WTC11 (cell line): ENCODE measurements at regions of chr18 and their contacts with region 1.

Region 1: GRCh38 chr18:11553098-11553940 is 56.1 kb upstream of the SLC35G4 start:
- DNase-seq: peak; percentile 57
- ATAC-seq: peak; percentile 95
- H3K4me3 Mint-ChIP-seq: no peak overlapping the region
- H3K27ac Mint-ChIP-seq: no peak overlapping the region
- H3K4me1 Mint-ChIP-seq: no peaks in the 10 kb centered on the region
- H3K27me3 Mint-ChIP-seq: no peaks in the 10 kb centered on the region
- CTCF ChIP-seq: peak; percentile 85

Region 2: DNA sequence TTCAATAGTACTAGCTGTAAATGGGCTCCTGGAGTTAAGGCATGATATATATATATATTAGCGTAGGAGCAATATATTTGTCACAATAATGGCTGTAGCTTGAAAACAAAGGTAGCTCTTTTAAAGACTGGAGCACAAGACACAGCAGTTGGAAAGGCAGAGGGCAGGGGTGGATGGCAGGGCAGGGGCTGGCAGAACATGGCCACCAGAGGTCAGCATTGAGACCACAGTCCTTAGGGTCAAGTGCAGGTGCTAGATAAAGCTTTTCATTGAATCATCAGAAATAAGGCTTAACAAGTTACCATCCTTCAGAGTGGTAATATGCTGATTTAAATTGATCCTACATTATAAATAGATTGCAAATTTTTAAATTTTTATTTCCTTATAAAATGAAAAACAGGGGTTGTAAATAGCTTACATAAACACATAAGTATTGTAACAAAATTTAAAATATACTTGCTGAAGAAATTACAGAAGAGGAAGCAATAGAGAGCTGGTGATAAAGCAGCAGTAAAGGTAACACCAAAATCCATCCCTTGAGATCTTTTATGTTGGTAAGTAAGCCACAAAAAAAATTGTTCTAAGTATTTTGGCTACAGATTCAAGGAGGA is 242.7 kb before region 1 on chr18:
- CTCF ChIA-PET with region 1: interaction called, 41 read pairs
- POLR2A ChIA-PET with region 1: no interaction called
- DNase-seq: peak; percentile 80
- ATAC-seq: peak; percentile 90
- H3K4me3 Mint-ChIP-seq: no peak overlapping the region
- H3K27ac Mint-ChIP-seq: no peak overlapping the region
- H3K4me1 Mint-ChIP-seq: no peaks in the 10 kb centered on the region
- H3K27me3 Mint-ChIP-seq: no peaks in the 10 kb centered on the region
- CTCF ChIP-seq: peak; percentile 74

Region 3: GRCh38 chr18:11512096-11513030 is 41.0 kb before region 1 on chr18:
- CTCF ChIA-PET with region 1: interaction called, 14 read pairs
- POLR2A ChIA-PET with region 1: no interaction called
- DNase-seq: no peak
- ATAC-seq: peak; percentile 48; the same call in 1 of the 2 replicates
- H3K4me3 Mint-ChIP-seq: no peak overlapping the region
- H3K27ac Mint-ChIP-seq: no peak overlapping the region
- H3K4me1 Mint-ChIP-seq: peaks cover 4% of the 10 kb centered on the region; the same call in 1 of the 2 replicates
- H3K27me3 Mint-ChIP-seq: no peaks in the 10 kb centered on the region
- CTCF ChIP-seq: no peak

Region 4: GRCh38 chr18:11541202-11541601 is 12.1 kb before region 1 on chr18:
- CTCF ChIA-PET with region 1: interaction called, 16 read pairs
- POLR2A ChIA-PET with region 1: no interaction called
- DNase-seq: no peak
- ATAC-seq: no peak
- H3K4me3 Mint-ChIP-seq: no peak overlapping the region
- H3K27ac Mint-ChIP-seq: no peak overlapping the region
- H3K4me1 Mint-ChIP-seq: peaks cover 12% of the 10 kb centered on the region
- H3K27me3 Mint-ChIP-seq: peaks cover 3% of the 10 kb centered on the region; the same call in 1 of the 2 replicates
- CTCF ChIP-seq: no peak

Region 5: GRCh38 chr18:11570769-11571168 is 17.4 kb after region 1 on chr18:
- CTCF ChIA-PET with region 1: interaction called, 18 read pairs
- POLR2A ChIA-PET with region 1: no interaction called
- DNase-seq: no peak
- ATAC-seq: no peak
- H3K4me3 Mint-ChIP-seq: no peak overlapping the region
- H3K27ac Mint-ChIP-seq: no peak overlapping the region
- H3K4me1 Mint-ChIP-seq: peaks cover 5% of the 10 kb centered on the region
- H3K27me3 Mint-ChIP-seq: peaks cover 2% of the 10 kb centered on the region; the same call in 1 of the 2 replicates
- CTCF ChIP-seq: no peak

Region 6: DNA sequence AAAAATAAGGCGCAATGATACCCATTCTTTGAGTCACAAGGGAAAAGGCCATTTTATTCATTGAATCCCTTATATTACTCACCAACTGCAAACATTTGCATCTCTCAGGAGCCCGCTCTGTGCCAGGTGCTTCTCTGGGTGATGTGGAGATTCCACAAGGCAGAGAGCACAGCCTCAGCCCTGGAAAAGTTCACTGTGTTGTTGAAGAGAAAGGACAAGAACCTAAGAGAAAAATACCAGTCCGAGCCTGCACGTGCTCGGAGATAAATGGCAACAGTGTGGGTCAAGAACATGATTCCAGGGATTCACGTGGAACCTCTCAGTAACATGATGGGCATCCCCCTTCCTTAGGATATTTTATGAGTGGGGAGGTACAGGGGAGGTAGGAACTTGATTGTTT is 147.6 kb after region 1 on chr18:
- CTCF ChIA-PET with region 1: no interaction called
- POLR2A ChIA-PET with region 1: no interaction called
- DNase-seq: no peak
- ATAC-seq: no peak
- H3K4me3 Mint-ChIP-seq: no peak overlapping the region
- H3K27ac Mint-ChIP-seq: no peak overlapping the region
- H3K4me1 Mint-ChIP-seq: no peaks in the 10 kb centered on the region
- H3K27me3 Mint-ChIP-seq: no peaks in the 10 kb centered on the region
- CTCF ChIP-seq: no peak